ENCODE measurements at regions of chr1 and their contacts with region 1.

Region 1: DNA sequence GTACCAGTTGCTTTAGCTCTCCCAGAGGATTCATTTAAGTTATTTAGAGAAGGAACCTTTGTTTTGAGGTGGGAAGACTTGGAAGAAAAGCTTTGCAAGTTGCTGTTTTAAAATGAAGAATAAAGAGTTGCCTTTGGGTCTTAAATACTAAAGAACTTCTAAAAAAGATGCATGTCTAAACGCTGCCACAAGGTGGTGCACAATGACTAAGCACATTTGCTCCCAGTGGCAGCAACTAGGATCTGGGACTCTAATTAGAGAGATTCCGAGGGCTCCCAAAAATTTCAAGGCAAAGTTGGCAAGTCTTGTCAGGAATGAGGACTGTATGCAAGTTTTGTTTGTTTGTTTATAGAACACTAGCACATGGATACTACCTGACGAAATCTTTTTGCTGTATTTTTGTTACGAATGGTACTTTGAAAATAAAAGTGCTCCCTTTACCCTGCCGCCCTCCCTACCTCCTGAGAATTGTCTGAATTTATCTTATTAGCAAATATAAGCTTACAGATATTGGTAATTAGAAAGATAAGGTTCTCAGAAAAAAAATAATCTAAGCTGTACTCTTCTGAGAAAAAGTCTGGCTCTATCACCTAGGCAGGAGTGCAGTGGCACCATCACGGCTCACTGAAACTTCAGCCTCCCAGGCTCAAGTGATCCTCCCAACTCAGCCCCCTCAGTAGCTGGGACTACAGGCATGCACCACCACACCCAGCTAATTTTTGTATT is 121.8 kb downstream of the HFM1 start:
- DNase-seq: peak in 12 of 14 experiments; percentile 2 to 67 (median 22)
- ATAC-seq: no peak
- H3K4me3 ChIP-seq: no peak overlapping the region
- H3K4me3 Mint-ChIP-seq: no peak overlapping the region
- H3K27ac ChIP-seq: no peak overlapping the region
- H3K27ac Mint-ChIP-seq: no peak overlapping the region
- H3K4me1 ChIP-seq: no peaks in the 10 kb centered on the region
- H3K4me1 Mint-ChIP-seq: no peaks in the 10 kb centered on the region
- H3K27me3 ChIP-seq: no peaks in the 10 kb centered on the region
- H3K27me3 Mint-ChIP-seq: peaks cover 11% of the 10 kb centered on the region
- CTCF ChIP-seq: peak; percentile 69

Region 2: DNA sequence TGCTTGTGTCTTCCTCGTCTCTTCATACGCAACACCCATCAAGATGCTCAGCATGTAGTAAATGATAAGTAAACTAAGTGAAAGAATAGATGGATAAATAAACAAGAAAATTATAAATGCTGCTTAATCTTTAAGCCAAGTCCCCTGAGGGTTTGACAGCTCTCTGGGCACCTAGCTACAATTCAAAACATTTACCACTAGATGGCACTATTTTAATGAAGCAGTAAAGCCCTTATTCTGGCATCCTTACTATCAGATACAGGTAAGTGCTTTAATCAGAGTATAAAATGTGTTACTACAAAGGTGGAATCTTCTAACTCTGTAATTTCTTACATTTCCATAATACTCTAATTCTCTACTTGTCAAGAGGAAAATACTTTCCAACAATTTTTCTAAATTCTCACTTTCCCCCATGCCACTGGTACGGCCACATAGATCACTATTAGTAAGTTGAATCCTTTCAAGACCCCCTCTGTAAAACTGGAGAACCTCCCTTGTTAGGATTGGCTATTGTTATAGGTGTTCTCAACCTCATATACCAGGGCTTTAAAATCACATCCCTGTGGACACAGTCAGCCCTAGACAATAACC is 703.6 kb before region 1 on chr1:
- CTCF ChIA-PET with region 1: interaction called, 3 read pairs
- POLR2A ChIA-PET with region 1: no interaction called
- intact Hi-C with region 1: loop called in 1 of 2 experiments (anchors 10 kb)
- DNase-seq: peak in 3 of 14 experiments; percentile 43 to 49 (median 49)
- ATAC-seq: no peak
- H3K4me3 ChIP-seq: no peak overlapping the region
- H3K4me3 Mint-ChIP-seq: no peak overlapping the region
- H3K27ac ChIP-seq: no peak overlapping the region
- H3K27ac Mint-ChIP-seq: no peak overlapping the region
- H3K4me1 ChIP-seq: no peaks in the 10 kb centered on the region
- H3K4me1 Mint-ChIP-seq: no peaks in the 10 kb centered on the region
- H3K27me3 ChIP-seq: peaks cover 0 to 4% of the 10 kb centered on the region in 2 experiments
- H3K27me3 Mint-ChIP-seq: peaks cover 8% of the 10 kb centered on the region
- CTCF ChIP-seq: peak; percentile 71

Region 3: DNA sequence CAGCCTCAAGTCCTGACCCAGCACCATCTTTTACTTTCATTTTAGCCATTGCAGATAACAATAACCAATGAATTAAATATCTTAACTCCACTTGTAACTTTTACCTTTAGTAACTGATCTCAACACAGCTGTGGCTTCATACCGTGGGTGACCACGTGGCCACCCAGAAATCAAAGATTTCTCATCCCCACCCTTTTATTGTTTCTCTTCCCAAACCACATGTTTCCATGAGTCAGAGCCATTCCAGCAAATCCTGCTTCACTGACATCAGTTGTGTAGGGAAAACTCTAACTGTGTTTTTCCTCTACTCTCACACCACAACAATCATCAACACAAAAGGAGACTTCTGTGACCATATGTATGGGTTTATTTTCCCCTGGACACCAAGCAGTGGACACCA is 641.3 kb after region 1 on chr1:
- CTCF ChIA-PET with region 1: no interaction called
- POLR2A ChIA-PET with region 1: no interaction called
- intact Hi-C with region 1: loop called in 1 of 2 experiments (anchors 1 kb)
- DNase-seq: no peak
- ATAC-seq: no peak
- H3K4me3 ChIP-seq: no peak overlapping the region
- H3K4me3 Mint-ChIP-seq: no peak overlapping the region
- H3K27ac ChIP-seq: no peak overlapping the region
- H3K27ac Mint-ChIP-seq: no peak overlapping the region
- H3K4me1 ChIP-seq: no peaks in the 10 kb centered on the region
- H3K4me1 Mint-ChIP-seq: no peaks in the 10 kb centered on the region
- H3K27me3 ChIP-seq: no peaks in the 10 kb centered on the region
- H3K27me3 Mint-ChIP-seq: no peaks in the 10 kb centered on the region
- CTCF ChIP-seq: no peak

Measured in CD4-positive, alpha-beta T cell (primary cell).